ENCODE measurements at regions of chr17 and their contacts with region 1.

Region 1: DNA sequence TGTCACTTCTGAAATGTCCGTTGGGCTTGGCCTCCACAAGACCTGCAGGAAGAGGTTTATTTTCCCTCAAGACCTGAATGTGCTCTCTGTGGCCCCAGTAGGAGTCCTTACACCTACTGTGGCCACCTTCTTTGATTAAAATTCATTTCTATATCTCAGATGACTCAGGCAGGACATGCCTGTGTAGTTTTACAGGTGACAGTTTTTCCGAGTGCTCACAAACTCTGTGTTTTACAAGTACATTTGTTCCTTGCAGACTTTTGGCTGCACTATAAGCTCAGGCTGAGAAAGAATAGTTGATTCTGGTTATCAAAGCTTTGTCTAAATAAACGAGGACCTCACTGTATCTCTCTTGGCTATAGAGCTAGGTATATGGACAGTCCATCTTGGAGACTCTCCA is 257.1 kb downstream of the MAP2K4 start:
- DNase-seq: no peak
- H3K4me3 ChIP-seq: no peak overlapping the region
- CTCF ChIP-seq: no peak
- POLR2A ChIP-seq: no peak

Region 2: DNA sequence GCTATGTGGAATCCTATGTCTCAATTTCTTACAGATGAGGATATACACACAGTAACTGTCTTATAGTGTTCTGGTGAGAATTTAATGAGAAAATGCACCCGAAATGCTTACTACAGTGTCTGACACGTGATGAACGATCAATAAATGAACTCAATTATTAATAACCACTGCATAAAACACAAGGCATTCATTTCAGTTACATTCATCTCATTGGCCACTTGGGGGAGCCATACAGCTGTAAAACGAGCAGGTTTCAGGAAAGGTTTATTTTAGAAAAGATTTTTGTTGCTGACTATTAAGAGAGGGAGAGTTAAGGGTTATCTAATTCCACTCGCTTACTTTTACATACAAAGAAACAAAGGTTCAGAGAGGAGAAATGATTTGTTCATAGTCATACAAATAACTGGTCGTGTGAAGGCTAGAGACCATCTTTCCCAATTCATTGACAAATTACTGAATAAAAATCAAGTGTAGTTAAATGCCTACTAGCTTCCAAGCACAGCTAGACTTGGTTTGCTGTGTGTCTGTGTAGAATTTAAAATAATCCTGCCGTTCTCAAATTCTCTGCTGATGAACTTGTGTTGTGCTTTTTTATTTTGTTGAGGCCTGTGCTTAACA is 97.1 kb before region 1 on chr17:
- intact Hi-C with region 1: no loop called
- DNase-seq: no peak
- H3K4me3 ChIP-seq: no peak overlapping the region
- CTCF ChIP-seq: no peak
- POLR2A ChIP-seq: no peak

Region 3: GRCh38 chr17:12348476-12348875 is 70.6 kb after region 1 on chr17:
- intact Hi-C with region 1: no loop called
- DNase-seq: no peak
- H3K4me3 ChIP-seq: no peak overlapping the region
- CTCF ChIP-seq: no peak
- POLR2A ChIP-seq: no peak

Region 4: DNA sequence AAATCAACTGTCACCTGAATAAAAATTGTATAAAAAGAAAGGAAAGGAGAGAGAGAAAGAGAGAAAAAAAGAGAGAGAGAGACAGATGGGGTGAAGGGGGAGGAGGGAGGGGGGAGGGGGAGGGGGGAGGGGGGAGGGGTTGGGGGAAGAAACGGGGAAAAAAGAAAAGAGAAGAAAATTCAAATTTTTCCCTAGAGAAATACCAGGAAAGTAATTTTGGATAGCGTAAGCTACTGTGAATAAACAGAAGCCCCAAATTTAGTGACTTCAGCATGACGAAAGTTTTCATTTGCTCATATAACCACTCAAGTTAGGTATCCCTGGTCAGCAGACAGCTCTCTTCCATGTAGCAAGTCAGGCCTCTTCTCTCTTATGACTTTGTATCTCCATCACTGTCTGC is 98.4 kb after region 1 on chr17:
- intact Hi-C with region 1: no loop called
- DNase-seq: no peak
- H3K4me3 ChIP-seq: no peak overlapping the region
- CTCF ChIP-seq: no peak
- POLR2A ChIP-seq: no peak

Region 5: DNA sequence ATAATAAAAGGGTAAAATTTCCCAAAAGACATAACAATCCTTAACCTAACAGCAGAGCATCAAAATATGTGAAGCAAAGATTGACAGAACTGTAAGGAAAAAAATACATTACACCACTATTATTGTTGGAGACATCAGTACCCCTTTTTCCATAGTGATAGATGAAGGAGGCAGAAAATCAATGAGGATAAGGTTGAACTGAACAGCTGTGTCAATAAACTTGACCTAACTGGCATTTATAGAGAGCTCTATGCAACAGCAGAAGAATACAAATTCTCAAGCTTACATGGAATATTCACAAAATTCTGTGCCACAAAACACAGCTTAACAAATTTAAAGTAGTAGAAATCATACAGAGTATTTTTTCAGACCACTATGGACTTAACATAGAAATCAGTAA is 935.0 kb after region 1 on chr17:
- intact Hi-C with region 1: loop called (anchors 5 kb)
- DNase-seq: no peak
- H3K4me3 ChIP-seq: no peak overlapping the region
- CTCF ChIP-seq: no peak
- POLR2A ChIP-seq: no peak